Mammary epithelial cell (primary cell): ENCODE measurements at regions of chr16 and their contacts with region 1.

Region 1: GRCh38 chr16:10743610-10744393 is at the start of gene NUBP1:
- DNase-seq: peak; percentile 98
- H3K4me3 ChIP-seq: peak within 1 kb of the TSS; percentile 57 to 90 (median 74)
- H3K27ac ChIP-seq: peak within 1 kb of the TSS; percentile 86
- H3K4me1 ChIP-seq: peaks cover 10% of the 10 kb centered on the region
- H3K27me3 ChIP-seq: no peaks in the 10 kb centered on the region
- CTCF ChIP-seq: no peak
- total RNA-seq, gene NUBP1: 10.3 to 22.9 TPM

Region 2: DNA sequence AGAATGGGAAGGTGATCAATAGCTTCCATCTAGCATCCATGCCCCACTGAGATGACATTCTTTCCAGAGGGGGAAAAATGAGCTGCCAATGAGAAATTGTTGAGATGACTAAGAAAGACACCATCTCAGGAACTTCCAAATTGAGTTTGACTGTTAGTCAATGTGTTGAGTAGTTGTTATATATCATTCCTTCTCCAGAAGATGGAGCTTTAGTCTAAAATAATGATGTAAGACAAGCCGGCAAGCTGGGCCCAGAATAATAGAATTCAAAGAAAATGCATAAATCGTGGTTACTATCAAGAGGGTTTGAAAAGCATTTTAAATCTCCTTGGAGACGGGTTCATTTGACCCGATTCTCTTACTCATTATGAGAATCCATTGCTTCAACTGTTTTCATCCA is 429.0 kb before region 1 on chr16:
- CTCF ChIA-PET with region 1: no interaction called
- dilution Hi-C with region 1: no loop called
- in situ Hi-C with region 1: loop called (anchors 25 kb)
- intact Hi-C with region 1: no loop called
- DNase-seq: peak; percentile 53
- H3K4me3 ChIP-seq: no peak overlapping the region
- H3K27ac ChIP-seq: no peak overlapping the region
- H3K4me1 ChIP-seq: no peaks in the 10 kb centered on the region
- H3K27me3 ChIP-seq: no peaks in the 10 kb centered on the region
- CTCF ChIP-seq: peak; percentile 11 to 52

Region 3: GRCh38 chr16:10529895-10530669 is 213.7 kb before region 1 on chr16:
- CTCF ChIA-PET with region 1: no interaction called
- dilution Hi-C with region 1: loop called (anchors 5 kb)
- in situ Hi-C with region 1: no loop called
- intact Hi-C with region 1: no loop called
- DNase-seq: no peak
- H3K4me3 ChIP-seq: no peak overlapping the region
- H3K27ac ChIP-seq: no peak overlapping the region
- H3K4me1 ChIP-seq: no peaks in the 10 kb centered on the region
- H3K27me3 ChIP-seq: peaks cover 2% of the 10 kb centered on the region
- CTCF ChIP-seq: no peak

Region 4: DNA sequence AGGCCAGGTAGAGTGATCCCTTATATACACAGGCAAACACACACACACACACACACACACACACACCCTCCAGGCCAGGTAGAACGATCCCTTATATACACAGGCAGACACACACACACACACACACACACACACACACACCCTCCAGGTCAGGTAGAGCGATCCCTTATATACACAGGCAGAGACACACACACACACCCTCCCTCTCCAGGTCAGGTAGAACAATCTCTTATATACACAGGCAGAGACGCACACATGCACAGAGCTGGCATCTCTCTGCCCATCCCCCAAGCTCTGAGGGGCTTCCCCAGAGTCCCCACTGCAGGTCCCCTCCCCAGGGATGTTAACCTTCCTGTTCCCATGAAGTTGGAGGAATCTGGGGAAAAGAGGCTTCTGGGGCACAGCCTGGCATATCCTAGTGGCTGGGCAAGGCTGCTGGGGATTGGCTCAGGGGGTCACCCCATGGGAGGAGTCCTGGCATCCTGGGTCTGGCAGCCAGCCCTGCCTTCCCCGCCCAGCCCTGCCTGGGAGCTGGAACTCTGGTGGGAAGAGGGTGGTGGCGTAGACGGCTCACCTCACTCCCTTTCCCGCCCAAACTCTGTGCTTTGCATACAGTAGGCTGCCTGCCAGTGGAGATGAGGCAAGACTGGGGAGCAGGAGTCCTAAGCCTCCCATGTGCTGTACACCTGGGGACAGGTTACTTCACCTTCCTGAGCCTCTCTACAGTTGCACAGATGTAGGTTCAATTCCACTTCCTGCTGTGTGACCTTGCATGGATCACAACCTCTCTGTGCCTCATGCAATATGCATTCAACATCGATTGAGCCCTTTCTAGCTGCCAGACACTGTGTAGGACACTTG is 90.8 kb before region 1 on chr16:
- CTCF ChIA-PET with region 1: no interaction called
- dilution Hi-C with region 1: loop called (anchors 5 kb)
- in situ Hi-C with region 1: no loop called
- intact Hi-C with region 1: no loop called
- DNase-seq: peak; percentile 89
- H3K4me3 ChIP-seq: peak overlapping the region; percentile 6 to 41 (median 30)
- H3K27ac ChIP-seq: peak overlapping the region; percentile 65
- H3K4me1 ChIP-seq: peaks cover 16% of the 10 kb centered on the region
- H3K27me3 ChIP-seq: no peaks in the 10 kb centered on the region
- CTCF ChIP-seq: no peak

Region 5: DNA sequence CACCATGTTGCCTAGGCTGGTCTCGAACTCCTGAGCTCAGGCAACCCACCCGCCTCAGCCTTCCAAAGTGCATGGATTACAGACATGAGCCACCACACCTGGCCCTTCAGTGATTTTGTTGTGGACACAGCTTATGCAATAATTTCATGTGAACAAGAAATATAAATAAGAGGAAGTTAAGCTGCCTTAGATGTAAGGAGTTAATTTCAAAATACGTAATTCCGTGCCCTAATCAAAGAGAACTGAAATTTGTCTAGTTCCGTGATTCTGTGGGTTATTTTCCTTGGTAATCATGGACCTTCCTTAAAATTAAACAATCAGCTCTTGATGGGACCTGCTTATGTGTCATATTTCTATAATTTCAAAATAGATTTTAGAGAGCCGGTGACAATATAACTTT is 62.9 kb after region 1 on chr16:
- CTCF ChIA-PET with region 1: no interaction called
- dilution Hi-C with region 1: no loop called
- in situ Hi-C with region 1: no loop called
- intact Hi-C with region 1: no loop called
- DNase-seq: no peak
- H3K4me3 ChIP-seq: no peak overlapping the region
- H3K27ac ChIP-seq: no peak overlapping the region
- H3K4me1 ChIP-seq: no peaks in the 10 kb centered on the region
- H3K27me3 ChIP-seq: no peaks in the 10 kb centered on the region
- CTCF ChIP-seq: no peak

Region 6: DNA sequence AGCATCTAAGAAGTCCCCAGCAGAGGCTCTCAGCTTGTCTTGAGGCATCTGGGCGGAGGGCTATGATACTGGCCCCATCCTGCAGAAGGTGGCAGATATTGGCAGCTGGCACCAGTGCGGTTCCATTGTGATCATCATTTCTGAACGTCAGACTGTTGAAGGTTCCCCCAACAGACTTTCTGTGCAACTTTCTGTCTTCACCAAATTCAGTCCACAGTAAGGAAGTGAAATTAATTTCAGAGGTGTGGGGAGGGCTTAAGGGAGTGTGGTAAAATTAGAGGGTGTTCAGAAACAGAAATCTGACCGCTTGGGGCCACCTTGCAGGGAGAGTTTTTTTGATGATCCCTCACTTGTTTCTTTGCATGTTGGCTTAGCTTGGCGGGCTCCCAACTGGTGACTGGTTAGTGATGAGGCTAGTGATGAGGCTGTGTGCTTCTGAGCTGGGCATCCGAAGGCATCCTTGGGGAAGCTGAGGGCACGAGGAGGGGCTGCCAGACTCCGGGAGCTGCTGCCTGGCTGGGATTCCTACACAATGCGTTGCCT is 133.1 kb after region 1 on chr16 and contains the start of gene CIITA:
- CTCF ChIA-PET with region 1: no interaction called
- dilution Hi-C with region 1: no loop called
- in situ Hi-C with region 1: no loop called
- intact Hi-C with region 1: loop called (anchors 2 kb)
- DNase-seq: peak; percentile 97
- H3K4me3 ChIP-seq: no peak within 1 kb of the TSS
- H3K27ac ChIP-seq: no peak within 1 kb of the TSS
- H3K4me1 ChIP-seq: peaks cover 21% of the 10 kb centered on the region
- H3K27me3 ChIP-seq: peaks cover 9% of the 10 kb centered on the region
- CTCF ChIP-seq: no peak
- total RNA-seq, gene CIITA: 0.17 to 0.35 TPM

Region 7: GRCh38 chr16:10906914-10907756 is 163.3 kb after region 1 on chr16:
- CTCF ChIA-PET with region 1: interaction called, 3 read pairs
- dilution Hi-C with region 1: loop called (anchors 5 kb)
- in situ Hi-C with region 1: loop called (anchors 10 to 25 kb)
- intact Hi-C with region 1: no loop called
- DNase-seq: no peak
- H3K4me3 ChIP-seq: no peak overlapping the region
- H3K27ac ChIP-seq: no peak overlapping the region
- H3K4me1 ChIP-seq: no peaks in the 10 kb centered on the region
- H3K27me3 ChIP-seq: peaks cover 2% of the 10 kb centered on the region
- CTCF ChIP-seq: no peak

Region 8: DNA sequence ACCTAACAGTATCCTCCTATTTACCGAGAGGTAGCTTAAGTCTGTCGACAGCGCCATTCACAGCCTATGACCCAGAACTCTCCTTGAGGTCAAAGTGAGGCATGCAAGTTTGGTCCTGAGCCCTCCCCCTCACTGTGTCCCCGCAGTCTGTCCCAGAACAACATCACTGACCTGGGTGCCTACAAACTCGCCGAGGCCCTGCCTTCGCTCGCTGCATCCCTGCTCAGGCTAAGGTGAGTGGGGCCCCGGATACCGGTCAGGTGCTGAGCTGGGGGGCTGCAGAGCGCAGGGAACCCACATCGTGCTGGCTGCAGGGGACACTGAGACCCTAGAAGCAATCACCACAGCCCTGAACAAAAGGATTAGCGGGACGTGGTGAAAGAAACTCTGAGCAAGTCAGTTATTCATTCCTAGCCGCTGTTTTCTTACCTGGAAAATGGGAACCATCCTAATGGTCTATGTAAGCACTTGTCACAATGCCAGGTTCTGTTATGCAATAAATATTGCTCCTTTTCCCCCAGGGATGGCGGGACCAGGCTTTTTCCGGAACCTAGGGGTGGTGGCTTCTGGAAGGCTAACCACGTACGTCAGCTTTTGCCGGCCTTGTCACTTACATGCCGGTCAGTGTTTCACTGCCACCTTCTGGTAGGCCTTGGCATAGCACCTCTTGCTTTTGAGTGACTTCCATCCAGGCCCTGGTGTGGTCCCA is 174.6 kb after region 1 on chr16:
- CTCF ChIA-PET with region 1: no interaction called
- dilution Hi-C with region 1: no loop called
- in situ Hi-C with region 1: loop called (anchors 10 to 25 kb)
- intact Hi-C with region 1: loop called (anchors 1 kb)
- DNase-seq: peak; percentile 77
- H3K4me3 ChIP-seq: no peak overlapping the region
- H3K27ac ChIP-seq: no peak overlapping the region
- H3K4me1 ChIP-seq: peaks cover 7% of the 10 kb centered on the region
- H3K27me3 ChIP-seq: no peaks in the 10 kb centered on the region
- CTCF ChIP-seq: peak; percentile 98 to 99

Region 9: DNA sequence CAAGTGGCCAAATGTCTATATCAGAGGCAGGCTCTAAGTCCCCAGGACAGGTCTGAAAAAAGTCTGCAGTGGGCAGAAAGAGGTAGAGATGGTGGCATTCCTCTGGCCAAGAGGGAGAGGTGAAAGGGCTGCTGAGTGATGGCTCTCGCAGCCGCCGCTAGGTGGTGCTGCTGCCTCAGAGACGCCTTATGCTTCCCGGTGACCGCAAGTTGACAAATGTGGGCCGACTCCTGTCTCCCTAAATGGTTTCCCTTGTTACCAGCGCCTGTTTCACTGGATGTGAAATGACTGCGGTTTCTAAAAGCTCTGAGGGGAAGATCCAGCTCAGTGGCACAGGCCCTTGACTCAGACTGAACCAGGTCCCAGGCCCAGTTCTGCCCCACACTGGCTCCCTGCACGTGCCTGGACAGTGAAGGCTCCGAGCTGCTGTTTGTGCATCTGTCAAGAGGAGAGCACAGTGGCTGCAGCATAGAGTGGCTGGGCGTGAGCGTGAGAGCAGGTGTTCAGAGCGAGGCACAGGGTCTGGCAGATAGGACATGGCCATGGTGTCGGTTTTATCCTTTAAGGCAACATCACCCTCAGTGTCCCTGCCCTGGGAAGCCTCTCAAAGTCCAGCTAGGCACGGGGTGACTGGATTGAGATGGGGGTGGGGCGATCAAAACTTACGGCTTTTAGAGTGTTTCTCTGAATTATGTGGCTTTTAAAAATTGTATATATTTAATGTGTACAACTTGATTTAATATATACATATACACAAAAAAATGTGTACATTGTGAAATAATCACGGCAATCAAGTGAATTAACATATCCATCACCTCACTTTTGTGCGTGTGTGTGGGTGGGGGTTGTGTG is 220.5 kb after region 1 on chr16:
- CTCF ChIA-PET with region 1: no interaction called
- dilution Hi-C with region 1: no loop called
- in situ Hi-C with region 1: no loop called
- intact Hi-C with region 1: no loop called
- DNase-seq: peak; percentile 77
- H3K4me3 ChIP-seq: no peak overlapping the region
- H3K27ac ChIP-seq: no peak overlapping the region
- H3K4me1 ChIP-seq: peaks cover 16% of the 10 kb centered on the region
- H3K27me3 ChIP-seq: no peaks in the 10 kb centered on the region
- CTCF ChIP-seq: peak; percentile 96 to 99